ENCODE measurements at regions of chr7 and their contacts with region 1.

Region 1: GRCh38 chr7:36723951-36724664 is at the start of gene AOAH:
- DNase-seq: no peak
- H3K27ac ChIP-seq: no peak within 1 kb of the TSS
- CTCF ChIP-seq: no peak

Region 2: GRCh38 chr7:36244429-36244828 is 479.7 kb before region 1 on chr7:
- CTCF ChIA-PET with region 1: no interaction called
- POLR2A ChIA-PET with region 1: no interaction called
- DNase-seq: no peak
- H3K27ac ChIP-seq: no peak overlapping the region
- CTCF ChIP-seq: no peak

Region 3: DNA sequence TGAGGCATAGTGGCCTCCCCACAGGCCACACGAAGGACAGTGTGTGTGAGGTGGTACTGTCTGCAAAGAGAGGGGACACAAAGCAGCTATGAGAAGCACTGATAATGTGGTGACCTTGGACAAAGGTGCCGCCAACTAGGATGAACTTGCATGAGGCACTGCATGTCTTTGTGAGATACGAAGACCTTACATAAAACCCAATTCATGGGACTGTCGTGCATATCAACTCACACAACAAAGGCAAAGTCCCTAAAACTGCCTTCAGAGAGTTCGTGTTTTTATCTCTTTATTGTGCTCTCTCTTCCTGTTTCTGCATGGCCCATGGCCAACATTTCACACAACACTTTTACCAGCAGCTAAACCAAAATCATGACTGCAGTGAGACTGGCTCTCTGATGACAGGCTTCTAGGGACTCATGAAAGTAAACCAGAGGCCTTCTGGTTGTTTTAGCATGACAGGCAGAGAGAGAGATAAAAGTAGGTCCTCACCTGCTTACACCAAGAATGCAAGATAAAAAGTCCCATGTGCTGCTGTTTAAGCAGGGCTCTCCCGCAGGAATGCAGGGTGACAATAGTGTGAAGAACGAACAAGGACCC is 376.7 kb after region 1 on chr7:
- CTCF ChIA-PET with region 1: interaction called, 12 read pairs
- POLR2A ChIA-PET with region 1: no interaction called
- DNase-seq: no peak
- H3K27ac ChIP-seq: no peak overlapping the region
- CTCF ChIP-seq: no peak

Measured in RWPE1 (cell line).